CD8-positive, alpha-beta memory T cell (primary cell): ENCODE measurements at regions of chr14 and their contacts with region 1.

Region 1: DNA sequence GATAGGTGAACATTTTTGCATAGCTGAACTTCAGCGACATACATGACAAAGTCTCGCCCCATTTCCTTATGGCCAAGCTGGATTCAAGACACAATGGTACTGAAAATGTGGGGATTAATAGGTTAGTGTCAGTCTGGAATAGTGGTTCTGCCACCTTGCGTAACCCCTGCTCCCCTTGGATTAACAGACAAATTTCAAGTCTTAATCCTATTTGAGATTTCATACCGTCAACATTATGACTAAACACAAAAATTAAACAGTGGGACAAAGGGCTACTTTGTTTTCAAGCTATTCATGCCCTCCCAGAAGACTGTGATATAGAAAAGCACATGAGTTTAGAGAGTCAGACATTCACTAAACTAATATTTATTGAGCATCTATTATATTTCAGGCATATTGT is 138.9 kb upstream of the HIF1A start:
- DNase-seq: no peak
- H3K4me3 ChIP-seq: no peak overlapping the region
- H3K4me3 Mint-ChIP-seq: no peak overlapping the region
- H3K27ac ChIP-seq: no peak overlapping the region
- H3K27ac Mint-ChIP-seq: no peak overlapping the region
- H3K4me1 ChIP-seq: peaks cover 17% of the 10 kb centered on the region
- H3K4me1 Mint-ChIP-seq: peaks cover 22 to 36% (median 29%) of the 10 kb centered on the region in 3 donors
- H3K27me3 ChIP-seq: no peaks in the 10 kb centered on the region
- H3K27me3 Mint-ChIP-seq: no peaks in the 10 kb centered on the region

Region 2: DNA sequence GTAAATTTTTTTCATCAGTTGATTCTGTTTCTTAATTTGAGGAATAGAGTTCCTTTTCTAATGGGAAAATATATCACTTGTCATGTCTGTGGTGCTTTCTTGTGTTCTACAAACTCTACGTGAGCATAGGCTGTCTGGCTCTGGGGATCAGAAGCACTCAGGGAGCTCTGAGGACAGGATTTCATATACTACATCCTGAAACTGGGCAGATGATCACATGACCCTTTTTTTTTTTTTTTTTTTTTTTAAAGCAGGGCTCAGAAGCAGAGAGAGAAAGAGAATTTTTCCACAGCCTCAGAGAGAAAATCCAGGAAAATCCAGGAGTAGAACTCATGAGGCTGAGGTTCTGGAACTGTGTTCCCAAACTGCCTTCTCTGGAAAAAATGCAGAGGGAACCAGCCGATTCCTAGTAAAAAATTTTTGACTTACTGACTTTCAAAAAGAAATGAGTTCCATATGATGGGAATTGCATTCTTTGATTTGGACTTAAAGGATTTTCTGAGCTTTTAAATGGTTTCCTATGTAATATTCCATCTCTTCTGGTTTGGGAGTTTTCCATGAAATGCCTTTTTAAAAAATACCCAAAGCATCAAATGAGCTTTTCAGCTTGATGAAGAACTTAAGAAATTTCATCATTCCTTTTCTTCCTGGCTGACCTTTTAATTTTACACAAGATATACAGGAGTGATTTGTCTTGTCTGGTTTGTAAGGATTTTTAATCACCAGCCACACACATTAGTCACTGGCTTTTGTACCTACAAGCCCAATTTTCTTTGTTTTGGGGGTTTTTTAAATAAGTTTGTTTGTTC is 44.2 kb before region 1 on chr14:
- CTCF ChIA-PET with region 1: no interaction called
- POLR2A ChIA-PET with region 1: interaction called, 12 read pairs
- DNase-seq: no peak
- H3K4me3 ChIP-seq: no peak overlapping the region
- H3K4me3 Mint-ChIP-seq: peak overlapping the region in 2 of 7 donors; percentile 10 to 63
- H3K27ac ChIP-seq: no peak overlapping the region
- H3K27ac Mint-ChIP-seq: peak overlapping the region; percentile 64 to 94 (median 81)
- H3K4me1 ChIP-seq: peaks cover 66% of the 10 kb centered on the region
- H3K4me1 Mint-ChIP-seq: peaks cover 84 to 94% (median 92%) of the 10 kb centered on the region in 3 donors
- H3K27me3 ChIP-seq: no peaks in the 10 kb centered on the region
- H3K27me3 Mint-ChIP-seq: peaks cover 0 to 9% of the 10 kb centered on the region in 2 donors